AG04449 (cell line): ENCODE measurements at regions of chr9 and their contacts with region 1.

Region 1: DNA sequence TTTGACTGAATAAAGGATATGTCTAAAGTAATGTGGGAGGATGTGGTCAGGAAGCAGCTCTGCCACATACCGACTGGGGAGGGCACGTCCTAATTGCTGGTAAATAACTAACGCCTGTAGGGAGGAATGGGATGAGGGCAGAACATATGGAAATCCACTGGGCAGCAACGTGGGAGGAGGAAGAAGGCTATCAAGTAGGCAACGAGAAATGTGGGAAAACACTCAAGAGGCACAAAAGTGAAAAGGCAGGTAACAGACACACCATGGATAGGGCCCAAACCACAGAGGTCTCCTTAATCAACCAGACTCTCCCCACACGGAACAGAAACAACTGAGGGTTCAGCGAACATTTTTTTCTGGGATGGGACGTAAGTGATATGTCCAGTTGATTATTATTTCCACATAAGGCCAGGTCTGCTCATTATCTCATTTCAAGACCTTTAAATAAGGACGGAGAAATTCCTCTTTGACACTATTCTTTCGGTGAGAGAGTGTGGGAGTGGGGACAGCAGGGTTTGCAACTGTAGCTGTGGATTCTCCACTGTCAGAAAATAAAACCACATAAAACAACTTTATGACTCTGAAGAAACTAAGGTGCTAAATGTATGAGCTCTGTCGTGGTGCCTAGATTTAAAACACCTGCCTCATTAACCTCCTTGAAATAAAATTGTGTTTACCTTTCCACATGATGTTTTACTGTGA is 17.0 kb downstream of the IARS1 start:
- DNase-seq: no peak
- H3K4me3 ChIP-seq: no peak overlapping the region
- CTCF ChIP-seq: no peak

Region 2: DNA sequence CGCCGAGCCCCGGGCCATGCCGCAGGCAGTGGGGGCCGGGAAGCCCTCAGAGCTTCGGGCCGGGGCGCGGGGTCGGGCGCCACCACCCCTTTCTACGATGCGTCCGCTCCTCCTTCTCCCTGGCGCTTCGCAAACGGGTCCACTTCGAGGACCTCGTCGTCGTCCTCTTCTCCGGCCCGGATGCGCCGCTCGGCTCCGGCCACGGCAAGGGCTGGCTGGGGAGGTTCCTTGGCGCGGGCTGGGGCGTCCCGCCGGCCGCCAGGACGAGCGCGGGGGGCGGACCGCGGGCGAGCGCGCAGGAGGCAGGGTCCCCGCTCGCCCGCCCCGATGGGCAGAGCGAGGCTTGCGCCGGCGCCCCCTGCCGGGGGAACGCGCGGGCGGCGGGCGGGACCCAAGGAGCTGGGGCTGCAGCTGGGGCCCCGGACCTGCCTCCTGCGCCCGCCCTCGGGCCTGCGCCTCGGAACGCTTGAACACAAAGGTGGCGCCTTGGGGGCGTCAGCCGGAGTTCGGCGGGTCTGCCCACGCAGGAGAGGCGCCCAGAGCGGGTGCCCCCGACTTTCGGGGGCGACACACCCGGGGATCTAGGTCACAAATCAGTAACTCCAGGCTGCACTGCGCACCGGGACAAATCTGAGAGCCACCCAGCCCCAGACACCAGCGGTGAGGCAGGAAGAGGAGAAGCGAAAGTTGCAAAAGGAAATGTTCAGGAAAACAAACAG is 326.4 kb before region 1 on chr9 and contains the start of gene ROR2:
- CTCF ChIA-PET with region 1: no interaction called
- POLR2A ChIA-PET with region 1: no interaction called
- DNase-seq: no peak
- H3K4me3 ChIP-seq: peak within 1 kb of the TSS; percentile 60
- CTCF ChIP-seq: peak; percentile 48

Region 3: GRCh38 chr9:92010705-92011536 is 265.6 kb before region 1 on chr9:
- CTCF ChIA-PET with region 1: no interaction called
- POLR2A ChIA-PET with region 1: no interaction called
- DNase-seq: no peak
- H3K4me3 ChIP-seq: no peak overlapping the region
- CTCF ChIP-seq: no peak

Region 4: GRCh38 chr9:92133949-92134604 is 142.4 kb before region 1 on chr9:
- CTCF ChIA-PET with region 1: interaction called, 53 read pairs
- POLR2A ChIA-PET with region 1: interaction called, 3 read pairs
- DNase-seq: no peak
- H3K4me3 ChIP-seq: peak overlapping the region; percentile 24
- CTCF ChIP-seq: peak; percentile 98

Region 5: DNA sequence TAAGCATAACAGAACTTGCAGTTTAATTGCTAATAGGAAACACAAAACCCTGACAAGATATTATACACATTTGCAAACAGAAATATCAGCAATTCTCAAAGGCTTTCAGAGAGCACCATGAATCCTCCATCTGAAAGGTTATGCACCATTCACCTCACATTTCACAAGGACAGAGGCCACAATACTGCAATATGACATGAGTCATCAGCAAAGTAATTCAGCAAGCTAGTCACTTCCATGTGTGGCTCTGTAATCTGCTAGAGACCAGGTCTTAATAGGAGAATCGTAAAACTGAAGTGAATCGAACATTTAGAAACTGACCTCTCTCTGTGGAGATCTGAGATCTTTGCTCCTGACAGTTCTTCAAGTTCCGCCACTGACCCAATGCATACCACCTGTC is 11.3 kb before region 1 on chr9:
- CTCF ChIA-PET with region 1: interaction called, 29 read pairs
- POLR2A ChIA-PET with region 1: interaction called, 3 read pairs
- DNase-seq: no peak
- H3K4me3 ChIP-seq: no peak overlapping the region
- CTCF ChIP-seq: no peak

Region 6: GRCh38 chr9:92293452-92294296 is 17.2 kb after region 1 on chr9 and contains the start of gene IARS1:
- CTCF ChIA-PET with region 1: interaction called, 18 read pairs
- POLR2A ChIA-PET with region 1: interaction called, 4 read pairs
- DNase-seq: peak; percentile 91
- H3K4me3 ChIP-seq: peak within 1 kb of the TSS; percentile 72
- CTCF ChIP-seq: peak; percentile 59

Region 7: GRCh38 chr9:92414566-92414965 is 138.1 kb after region 1 on chr9:
- CTCF ChIA-PET with region 1: no interaction called
- POLR2A ChIA-PET with region 1: no interaction called
- DNase-seq: no peak
- H3K4me3 ChIP-seq: no peak overlapping the region
- CTCF ChIP-seq: no peak